ENCODE measurements at regions of chr11 and their contacts with region 1.

Region 1: GRCh38 chr11:118607401-118608359 is at the start of gene PHLDB1:
- DNase-seq: peak; percentile 72 to 86
- ATAC-seq: peak; percentile 63 to 82 (median 75)
- H3K4me3 ChIP-seq: peak within 1 kb of the TSS; percentile 88
- H3K27ac ChIP-seq: peak within 1 kb of the TSS; percentile 81
- H3K4me1 ChIP-seq: peaks cover 5% of the 10 kb centered on the region
- H3K27me3 ChIP-seq: no peaks in the 10 kb centered on the region
- CTCF ChIP-seq: peak; percentile 47
- total RNA-seq, gene PHLDB1: 27.7 to 45.8 (median 34.2) TPM

Region 2: GRCh38 chr11:117529816-117530215 is 1077.9 kb before region 1 on chr11:
- intact Hi-C with region 1: loop called in 1 of 2 experiments (anchors 5 kb)
- DNase-seq: no peak
- ATAC-seq: no peak
- H3K4me3 ChIP-seq: no peak overlapping the region
- H3K27ac ChIP-seq: no peak overlapping the region
- H3K4me1 ChIP-seq: no peaks in the 10 kb centered on the region
- H3K27me3 ChIP-seq: peaks cover 0 to 42% (median 8%) of the 10 kb centered on the region in 3 donors
- CTCF ChIP-seq: no peak

Region 3: DNA sequence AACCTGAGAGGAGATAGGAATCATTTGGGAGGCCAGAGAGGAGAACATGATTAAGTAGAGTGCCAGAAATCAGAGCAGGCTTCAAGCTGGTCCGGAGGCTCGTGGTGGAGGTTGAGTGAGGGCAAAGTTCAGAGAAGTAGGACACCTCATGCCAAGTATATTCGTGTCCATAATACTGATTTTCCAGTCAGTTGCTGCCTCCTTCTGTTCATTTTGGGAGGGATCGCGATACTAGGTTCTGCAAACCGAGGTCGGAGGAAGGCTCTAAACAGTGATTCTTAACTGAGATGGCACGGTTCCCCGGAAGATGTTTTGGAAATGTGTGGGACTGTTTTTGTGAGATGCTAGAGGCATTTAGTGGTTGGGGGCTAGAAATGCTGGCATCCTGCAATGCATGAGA is 316.8 kb before region 1 on chr11:
- intact Hi-C with region 1: no loop called
- DNase-seq: no peak
- ATAC-seq: peak in 1 of 4 donors; percentile 24
- H3K4me3 ChIP-seq: no peak overlapping the region
- H3K27ac ChIP-seq: no peak overlapping the region
- H3K4me1 ChIP-seq: no peaks in the 10 kb centered on the region
- H3K27me3 ChIP-seq: peaks cover 0 to 3% (median 0%) of the 10 kb centered on the region in 3 donors
- CTCF ChIP-seq: peak; percentile 10

Region 4: GRCh38 chr11:118640332-118641154 is 32.9 kb after region 1 on chr11:
- intact Hi-C with region 1: loop called in 1 of 2 experiments (anchors 5 kb)
- DNase-seq: no peak
- ATAC-seq: peak; percentile 29 to 49 (median 36)
- H3K4me3 ChIP-seq: no peak overlapping the region
- H3K27ac ChIP-seq: peak overlapping the region; percentile 15
- H3K4me1 ChIP-seq: peaks cover 35% of the 10 kb centered on the region
- H3K27me3 ChIP-seq: no peaks in the 10 kb centered on the region
- CTCF ChIP-seq: peak; percentile 44

Region 5: DNA sequence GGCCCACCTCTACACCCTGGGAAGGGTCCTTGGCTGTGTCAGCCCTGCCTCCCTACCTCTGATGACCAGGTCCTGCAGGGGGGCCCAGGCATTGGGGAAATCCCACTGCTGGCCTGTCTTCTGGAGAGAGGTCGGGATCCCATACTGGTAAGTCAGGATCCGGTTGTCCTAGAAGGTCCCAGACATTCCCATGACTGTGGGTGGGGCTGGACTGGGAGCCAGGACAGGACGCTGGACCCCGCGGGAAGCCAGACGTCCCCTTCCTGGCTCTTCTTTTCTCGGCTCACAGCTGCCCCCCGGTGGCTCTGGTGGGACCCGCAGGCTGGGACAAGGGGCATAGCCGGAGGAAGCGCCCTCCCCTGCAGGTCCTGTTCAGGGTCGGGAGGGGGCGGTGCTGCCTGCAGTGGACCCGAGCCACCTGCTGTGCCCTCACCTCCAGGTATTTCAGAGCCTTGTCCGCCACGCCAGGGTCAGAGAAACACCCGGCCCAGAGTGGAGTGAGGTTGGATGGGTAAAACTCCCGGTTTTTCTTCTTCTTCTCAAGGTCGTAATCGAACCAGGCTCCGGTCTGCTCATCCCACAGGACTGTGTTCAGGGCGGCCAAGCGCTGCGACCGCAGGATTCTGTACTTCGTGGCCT is 51.8 kb after region 1 on chr11:
- intact Hi-C with region 1: loop called (anchors 5 kb)
- DNase-seq: peak; percentile 94 to 96
- ATAC-seq: peak; percentile 90 to 95 (median 92)
- H3K4me3 ChIP-seq: peak overlapping the region; percentile 1
- H3K27ac ChIP-seq: peak overlapping the region; percentile 30
- H3K4me1 ChIP-seq: peaks cover 7% of the 10 kb centered on the region
- H3K27me3 ChIP-seq: no peaks in the 10 kb centered on the region
- CTCF ChIP-seq: peak; percentile 93